ENCODE measurements at regions of chr14 and their contacts with region 1.

Region 1: GRCh38 chr14:101843665-101844064 is 82.2 kb downstream of the PPP2R5C start:
- DNase-seq: peak; percentile 83
- H3K4me3 Mint-ChIP-seq: no peak overlapping the region
- H3K27ac Mint-ChIP-seq: peak overlapping the region; percentile 85
- H3K4me1 Mint-ChIP-seq: peaks cover 87% of the 10 kb centered on the region
- H3K27me3 Mint-ChIP-seq: no peaks in the 10 kb centered on the region

Region 2: GRCh38 chr14:101774006-101774795 is 69.5 kb before region 1 on chr14:
- CTCF ChIA-PET with region 1: interaction called, 82 read pairs
- POLR2A ChIA-PET with region 1: interaction called, 7 read pairs
- intact Hi-C with region 1: loop called (anchors 1 kb)
- DNase-seq: no peak
- H3K4me3 Mint-ChIP-seq: no peak overlapping the region
- H3K27ac Mint-ChIP-seq: no peak overlapping the region
- H3K4me1 Mint-ChIP-seq: peaks cover 25% of the 10 kb centered on the region
- H3K27me3 Mint-ChIP-seq: no peaks in the 10 kb centered on the region

Region 3: GRCh38 chr14:101809671-101810514 is 33.8 kb before region 1 on chr14:
- CTCF ChIA-PET with region 1: interaction called, 10 read pairs
- POLR2A ChIA-PET with region 1: interaction called, 17 read pairs
- intact Hi-C with region 1: loop called (anchors 1 kb)
- DNase-seq: peak; percentile 91
- H3K4me3 Mint-ChIP-seq: peak overlapping the region; percentile 86
- H3K27ac Mint-ChIP-seq: peak overlapping the region; percentile 98
- H3K4me1 Mint-ChIP-seq: peaks cover 49% of the 10 kb centered on the region
- H3K27me3 Mint-ChIP-seq: no peaks in the 10 kb centered on the region

Region 4: GRCh38 chr14:101817501-101818001 is 26.1 kb before region 1 on chr14:
- CTCF ChIA-PET with region 1: interaction called, 10 read pairs
- POLR2A ChIA-PET with region 1: interaction called, 80 read pairs
- intact Hi-C with region 1: no loop called
- DNase-seq: peak; percentile 63
- H3K4me3 Mint-ChIP-seq: peak overlapping the region; percentile 75
- H3K27ac Mint-ChIP-seq: peak overlapping the region; percentile 99
- H3K4me1 Mint-ChIP-seq: peaks cover 89% of the 10 kb centered on the region
- H3K27me3 Mint-ChIP-seq: no peaks in the 10 kb centered on the region

Region 5: GRCh38 chr14:101854366-101854765 is 10.7 kb after region 1 on chr14:
- CTCF ChIA-PET with region 1: interaction called, 13 read pairs
- POLR2A ChIA-PET with region 1: interaction called, 5 read pairs
- intact Hi-C with region 1: loop called (anchors 2 kb)
- DNase-seq: peak; percentile 47
- H3K4me3 Mint-ChIP-seq: peak overlapping the region; percentile 31
- H3K27ac Mint-ChIP-seq: peak overlapping the region; percentile 77
- H3K4me1 Mint-ChIP-seq: peaks cover 89% of the 10 kb centered on the region
- H3K27me3 Mint-ChIP-seq: no peaks in the 10 kb centered on the region

Region 6: DNA sequence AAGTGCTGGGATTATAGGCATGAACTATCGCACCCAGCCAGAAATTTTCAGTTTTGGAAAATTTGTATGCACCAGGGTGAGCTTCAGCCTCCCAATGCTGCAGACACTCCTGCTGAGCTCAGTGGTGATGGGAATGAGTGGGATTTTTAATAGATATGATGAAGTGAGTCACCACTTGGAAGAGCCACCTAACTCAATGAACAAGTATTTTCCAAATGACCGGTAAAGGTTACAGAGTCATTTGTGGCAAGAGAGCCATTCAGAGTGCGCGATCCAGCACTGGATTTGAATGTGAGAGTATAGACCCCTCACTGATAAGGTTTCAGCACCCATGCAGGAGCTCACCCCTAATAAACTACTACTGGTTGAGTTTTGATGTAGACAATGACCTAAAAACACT is 18.5 kb after region 1 on chr14:
- CTCF ChIA-PET with region 1: interaction called, 8 read pairs
- POLR2A ChIA-PET with region 1: no interaction called
- intact Hi-C with region 1: loop called (anchors 2 kb)
- DNase-seq: no peak
- H3K4me3 Mint-ChIP-seq: no peak overlapping the region
- H3K27ac Mint-ChIP-seq: peak overlapping the region; percentile 53
- H3K4me1 Mint-ChIP-seq: peaks cover 53% of the 10 kb centered on the region
- H3K27me3 Mint-ChIP-seq: no peaks in the 10 kb centered on the region

Region 7: DNA sequence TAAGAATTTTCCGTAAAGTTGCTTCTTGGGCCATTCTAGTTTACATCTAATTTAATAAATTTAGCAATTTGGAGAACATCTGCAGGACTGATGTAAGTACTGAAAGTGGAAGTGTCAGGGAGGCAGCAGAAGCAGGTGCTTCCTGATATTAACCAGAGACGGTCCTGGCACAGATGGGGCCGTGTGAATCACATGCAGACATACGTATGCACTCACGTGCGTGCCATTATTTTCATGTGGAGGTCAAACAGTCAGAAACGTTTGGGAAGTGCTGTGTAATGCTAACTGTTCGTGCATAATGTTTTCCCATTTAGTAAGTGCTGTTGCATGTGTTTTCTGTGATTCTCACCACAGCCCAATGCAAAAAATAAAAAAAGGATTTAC is 32.9 kb after region 1 on chr14:
- CTCF ChIA-PET with region 1: interaction called, 30 read pairs
- POLR2A ChIA-PET with region 1: interaction called, 31 read pairs
- intact Hi-C with region 1: loop called (anchors 1 kb)
- DNase-seq: peak; percentile 87
- H3K4me3 Mint-ChIP-seq: peak overlapping the region; percentile 56
- H3K27ac Mint-ChIP-seq: peak overlapping the region; percentile 84
- H3K4me1 Mint-ChIP-seq: peaks cover 91% of the 10 kb centered on the region
- H3K27me3 Mint-ChIP-seq: no peaks in the 10 kb centered on the region

Region 8: DNA sequence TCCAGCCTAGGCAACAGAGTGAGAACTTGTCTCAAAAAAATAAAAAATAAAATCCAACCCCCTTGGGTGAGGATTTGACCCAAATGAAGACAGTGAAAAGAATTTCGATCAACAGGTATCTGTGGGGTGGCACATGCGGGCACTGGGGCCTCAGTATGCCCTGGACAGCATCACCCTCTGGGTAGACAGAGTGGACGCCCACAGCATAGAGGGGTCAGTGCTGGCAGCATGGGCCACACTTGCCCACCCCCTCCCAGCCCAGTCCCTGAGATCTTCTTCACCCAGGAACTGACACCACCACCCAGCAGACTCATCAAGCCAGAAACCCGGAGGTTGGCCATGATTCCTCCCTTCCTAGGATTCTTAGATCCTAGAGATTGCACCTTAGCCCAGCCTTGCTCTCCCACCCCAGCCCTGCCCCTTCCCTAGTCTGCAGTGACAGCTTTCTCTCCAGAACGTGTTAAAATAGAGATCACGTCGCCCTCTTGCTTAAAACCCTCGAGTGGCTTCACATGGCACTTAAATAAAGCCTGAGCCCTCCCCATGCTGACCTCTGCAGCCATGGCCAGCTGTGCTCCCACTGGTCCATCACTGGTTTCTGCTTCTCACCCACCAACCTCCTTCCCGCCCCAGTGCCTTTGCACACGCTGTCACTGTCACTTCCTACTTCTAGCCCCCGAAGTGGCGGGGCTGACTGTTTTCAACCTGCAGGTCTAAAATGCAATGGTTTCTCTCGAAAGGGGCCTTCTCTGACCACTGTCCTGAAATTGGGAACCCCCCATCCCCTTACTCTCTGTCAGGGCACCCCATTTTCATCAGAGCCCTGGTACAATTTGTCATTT is 94.5 kb after region 1 on chr14:
- CTCF ChIA-PET with region 1: no interaction called
- POLR2A ChIA-PET with region 1: no interaction called
- intact Hi-C with region 1: no loop called
- DNase-seq: no peak
- H3K4me3 Mint-ChIP-seq: no peak overlapping the region
- H3K27ac Mint-ChIP-seq: no peak overlapping the region
- H3K4me1 Mint-ChIP-seq: no peaks in the 10 kb centered on the region
- H3K27me3 Mint-ChIP-seq: peaks cover 22% of the 10 kb centered on the region

Region 9: GRCh38 chr14:102164241-102164641 is 320.6 kb after region 1 on chr14:
- CTCF ChIA-PET with region 1: no interaction called
- POLR2A ChIA-PET with region 1: no interaction called
- intact Hi-C with region 1: no loop called
- DNase-seq: no peak
- H3K4me3 Mint-ChIP-seq: no peak overlapping the region
- H3K27ac Mint-ChIP-seq: no peak overlapping the region
- H3K4me1 Mint-ChIP-seq: peaks cover 45% of the 10 kb centered on the region
- H3K27me3 Mint-ChIP-seq: no peaks in the 10 kb centered on the region